Natural killer cell (primary cell): ENCODE measurements at regions of chr6 and their contacts with region 1.

Region 1: GRCh38 chr6:134174672-134175198 is 122.3 kb upstream of the SLC2A12 start:
- DNase-seq: peak; percentile 84 to 95
- ATAC-seq: peak; percentile 83 to 91 (median 85)
- H3K4me3 ChIP-seq: peak overlapping the region; percentile 55
- H3K4me3 Mint-ChIP-seq: peak overlapping the region; percentile 94
- H3K27ac ChIP-seq: peak overlapping the region; percentile 81
- H3K27ac Mint-ChIP-seq: peak overlapping the region; percentile 83 to 87
- H3K4me1 ChIP-seq: peaks cover 35% of the 10 kb centered on the region
- H3K4me1 Mint-ChIP-seq: peaks cover 36 to 38% of the 10 kb centered on the region in 2 donors
- H3K27me3 ChIP-seq: no peaks in the 10 kb centered on the region
- H3K27me3 Mint-ChIP-seq: peaks cover 8 to 22% of the 10 kb centered on the region in 2 donors
- CTCF ChIP-seq: no peak

Region 2: DNA sequence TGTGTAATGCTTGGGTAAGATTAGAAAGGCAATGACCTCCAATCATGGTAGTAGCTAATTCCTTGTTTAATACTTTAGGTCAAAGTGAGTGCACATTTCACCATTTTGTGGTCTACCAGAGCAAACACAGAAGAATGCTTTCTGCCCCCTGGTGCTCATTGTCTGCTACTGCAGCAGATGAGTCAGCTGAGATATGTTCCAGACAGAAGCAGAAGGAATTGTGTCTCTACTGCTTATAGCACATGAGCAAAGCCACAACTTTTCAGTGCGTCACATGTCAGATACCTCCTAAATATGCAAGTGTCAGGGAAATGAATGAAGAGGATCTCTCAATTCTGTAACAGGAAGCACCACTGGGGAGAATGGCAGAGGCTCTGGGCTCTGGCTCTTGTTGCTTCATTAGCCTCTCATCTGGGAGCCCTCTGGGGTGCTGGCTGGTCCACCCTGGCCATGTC is 466.3 kb after region 1 on chr6:
- intact Hi-C with region 1: loop called (anchors 1 kb)
- DNase-seq: peak; percentile 55 to 90
- ATAC-seq: peak; percentile 87 to 97 (median 91)
- H3K4me3 ChIP-seq: no peak overlapping the region
- H3K4me3 Mint-ChIP-seq: no peak overlapping the region
- H3K27ac ChIP-seq: no peak overlapping the region
- H3K27ac Mint-ChIP-seq: no peak overlapping the region
- H3K4me1 ChIP-seq: no peaks in the 10 kb centered on the region
- H3K4me1 Mint-ChIP-seq: peaks cover 0 to 6% of the 10 kb centered on the region in 2 donors
- H3K27me3 ChIP-seq: no peaks in the 10 kb centered on the region
- H3K27me3 Mint-ChIP-seq: peaks cover 13 to 20% of the 10 kb centered on the region in 2 donors
- CTCF ChIP-seq: peak; percentile 92

Region 3: GRCh38 chr6:134822920-134823709 is 648.4 kb after region 1 on chr6:
- intact Hi-C with region 1: loop called (anchors 1 kb)
- DNase-seq: peak in 1 of 2 donors; percentile 78
- ATAC-seq: peak; percentile 38 to 65 (median 49)
- H3K4me3 ChIP-seq: no peak overlapping the region
- H3K4me3 Mint-ChIP-seq: no peak overlapping the region
- H3K27ac ChIP-seq: no peak overlapping the region
- H3K27ac Mint-ChIP-seq: no peak overlapping the region
- H3K4me1 ChIP-seq: no peaks in the 10 kb centered on the region
- H3K4me1 Mint-ChIP-seq: no peaks in the 10 kb centered on the region
- H3K27me3 ChIP-seq: no peaks in the 10 kb centered on the region
- H3K27me3 Mint-ChIP-seq: peaks cover 4 to 12% of the 10 kb centered on the region in 2 donors
- CTCF ChIP-seq: peak; percentile 39

Region 4: GRCh38 chr6:134882426-134883038 is 707.8 kb after region 1 on chr6:
- intact Hi-C with region 1: loop called (anchors 1 kb)
- DNase-seq: peak; percentile 27 to 73
- ATAC-seq: peak; percentile 64 to 69 (median 68)
- H3K4me3 ChIP-seq: no peak overlapping the region
- H3K4me3 Mint-ChIP-seq: no peak overlapping the region
- H3K27ac ChIP-seq: no peak overlapping the region
- H3K27ac Mint-ChIP-seq: no peak overlapping the region
- H3K4me1 ChIP-seq: no peaks in the 10 kb centered on the region
- H3K4me1 Mint-ChIP-seq: no peaks in the 10 kb centered on the region
- H3K27me3 ChIP-seq: no peaks in the 10 kb centered on the region
- H3K27me3 Mint-ChIP-seq: peaks cover 20 to 24% of the 10 kb centered on the region in 2 donors
- CTCF ChIP-seq: peak; percentile 78

Region 5: GRCh38 chr6:134938896-134939295 is 764.2 kb after region 1 on chr6:
- intact Hi-C with region 1: loop called (anchors 1 kb)
- DNase-seq: peak in 1 of 2 donors; percentile 72
- ATAC-seq: peak in 1 of 3 donors; percentile 39
- H3K4me3 ChIP-seq: no peak overlapping the region
- H3K4me3 Mint-ChIP-seq: no peak overlapping the region
- H3K27ac ChIP-seq: no peak overlapping the region
- H3K27ac Mint-ChIP-seq: no peak overlapping the region
- H3K4me1 ChIP-seq: no peaks in the 10 kb centered on the region
- H3K4me1 Mint-ChIP-seq: no peaks in the 10 kb centered on the region
- H3K27me3 ChIP-seq: no peaks in the 10 kb centered on the region
- H3K27me3 Mint-ChIP-seq: no peaks in the 10 kb centered on the region
- CTCF ChIP-seq: no peak

Region 6: DNA sequence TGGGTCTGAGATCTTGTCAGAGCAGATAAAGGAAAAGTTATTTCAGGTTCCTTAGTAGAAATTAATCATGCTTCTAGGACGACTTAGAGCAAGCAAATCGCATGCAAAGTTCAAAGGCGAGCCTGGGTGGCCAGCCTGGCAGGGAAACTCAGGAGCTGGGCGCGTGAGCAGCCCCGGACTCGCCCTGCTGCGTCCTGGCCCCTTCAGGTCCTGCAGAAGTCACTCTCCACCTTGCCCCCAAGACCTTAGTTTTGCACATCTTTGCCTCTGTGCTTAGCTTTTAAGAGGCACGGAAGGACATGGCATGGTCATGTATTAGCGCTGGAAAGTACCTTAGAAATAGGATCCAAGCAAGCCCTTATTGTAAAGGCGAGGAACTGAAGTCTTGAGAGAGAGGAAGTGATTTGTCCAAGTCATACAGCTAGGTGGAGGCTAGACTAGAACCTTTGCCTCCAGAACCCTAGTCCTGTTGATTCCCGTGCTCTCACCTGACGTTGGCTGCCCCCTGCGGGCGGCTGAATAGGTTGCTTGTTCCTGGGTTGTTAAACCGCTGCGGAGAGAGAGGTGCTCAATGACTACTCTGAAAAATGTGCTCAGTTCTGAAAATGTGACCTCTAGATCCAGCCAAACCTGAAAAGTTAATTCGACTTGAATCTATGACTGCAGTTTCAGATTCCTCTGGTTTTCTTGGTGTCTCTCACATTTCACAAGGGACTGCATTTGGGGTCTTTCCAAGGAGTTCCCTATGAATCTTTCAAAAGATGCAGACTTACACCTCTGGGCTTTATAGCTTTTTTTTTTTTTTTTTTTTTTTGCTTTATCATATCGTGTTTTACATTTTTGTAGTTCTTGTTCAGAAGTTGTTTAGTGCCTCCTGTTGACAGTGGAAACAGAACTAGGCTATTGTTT is 1009.1 kb after region 1 on chr6:
- intact Hi-C with region 1: loop called (anchors 10 kb)
- DNase-seq: peak; percentile 39 to 87
- ATAC-seq: peak; percentile 39 to 56 (median 56)
- H3K4me3 ChIP-seq: peak overlapping the region; percentile 51
- H3K4me3 Mint-ChIP-seq: peak overlapping the region; percentile 88
- H3K27ac ChIP-seq: no peak overlapping the region
- H3K27ac Mint-ChIP-seq: no peak overlapping the region
- H3K4me1 ChIP-seq: peaks cover 24% of the 10 kb centered on the region
- H3K4me1 Mint-ChIP-seq: peaks cover 21 to 30% of the 10 kb centered on the region in 2 donors
- H3K27me3 ChIP-seq: peaks cover 3% of the 10 kb centered on the region
- H3K27me3 Mint-ChIP-seq: peaks cover 6 to 10% of the 10 kb centered on the region in 2 donors
- CTCF ChIP-seq: no peak

Region 7: GRCh38 chr6:135440087-135440792 is 1265.5 kb after region 1 on chr6:
- intact Hi-C with region 1: loop called (anchors 5 kb)
- DNase-seq: peak in 1 of 2 donors; percentile 34
- ATAC-seq: peak; percentile 78 to 84 (median 79)
- H3K4me3 ChIP-seq: no peak overlapping the region
- H3K4me3 Mint-ChIP-seq: peak overlapping the region; percentile 65
- H3K27ac ChIP-seq: peak overlapping the region; percentile 4
- H3K27ac Mint-ChIP-seq: peak overlapping the region; percentile 32 to 85
- H3K4me1 ChIP-seq: peaks cover 3% of the 10 kb centered on the region
- H3K4me1 Mint-ChIP-seq: peaks cover 17 to 18% of the 10 kb centered on the region in 2 donors
- H3K27me3 ChIP-seq: no peaks in the 10 kb centered on the region
- H3K27me3 Mint-ChIP-seq: no peaks in the 10 kb centered on the region
- CTCF ChIP-seq: no peak